HepG2 (cell line): ENCODE measurements at regions of chr1 and their contacts with region 1.

Region 1: DNA sequence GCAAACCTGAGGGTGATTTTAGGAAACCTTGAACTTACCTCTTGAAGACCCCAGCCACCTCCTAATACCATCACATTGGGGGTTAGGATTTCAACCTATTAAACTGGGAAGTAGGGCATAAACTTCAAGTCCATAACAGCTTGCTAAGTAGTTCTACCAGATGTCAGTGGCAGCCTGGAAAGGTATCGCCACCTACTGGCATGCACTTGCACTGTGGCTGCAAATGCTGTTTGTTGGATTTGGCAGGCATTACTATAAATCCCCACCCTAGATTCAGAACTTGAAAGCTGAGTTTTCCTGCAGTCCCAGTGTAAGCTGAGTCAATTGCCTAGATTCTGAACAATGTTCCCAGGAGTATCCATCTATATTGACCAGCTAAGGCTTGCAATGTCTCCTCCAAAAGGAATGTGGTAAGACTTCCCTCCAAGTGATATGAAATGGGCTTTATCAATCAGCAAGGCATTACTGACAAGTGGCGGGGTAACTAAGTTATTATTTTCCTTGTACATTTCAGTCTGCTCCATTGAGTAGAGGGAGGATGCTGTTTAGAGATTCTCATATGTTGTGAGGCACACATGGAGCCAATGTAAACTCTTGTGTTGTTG is 474.5 kb downstream of the PTPRC start:
- DNase-seq: peak; percentile 10
- ATAC-seq: peak; percentile 64
- H3K4me3 ChIP-seq: no peak overlapping the region
- H3K27ac ChIP-seq: no peak overlapping the region
- H3K4me1 ChIP-seq: no peaks in the 10 kb centered on the region
- H3K27me3 ChIP-seq: no peaks in the 10 kb centered on the region
- CTCF ChIP-seq: peak; percentile 56
- EP300 ChIP-seq: no peak
- POLR2A ChIP-seq: no peak
- RAD21 ChIP-seq: no peak

Region 2: GRCh38 chr1:198771563-198772153 is 341.7 kb before region 1 on chr1:
- CTCF ChIA-PET with region 1: no interaction called
- POLR2A ChIA-PET with region 1: no interaction called
- in situ Hi-C with region 1: loop called (anchors 25 kb)
- intact Hi-C with region 1: loop called (anchors 1 kb)
- DNase-seq: peak; percentile 7
- ATAC-seq: no peak
- H3K4me3 ChIP-seq: no peak overlapping the region
- H3K27ac ChIP-seq: no peak overlapping the region
- H3K4me1 ChIP-seq: no peaks in the 10 kb centered on the region
- H3K27me3 ChIP-seq: no peaks in the 10 kb centered on the region; a peak in 1 of 5 replicates
- CTCF ChIP-seq: no peak
- EP300 ChIP-seq: no peak
- POLR2A ChIP-seq: no peak
- RAD21 ChIP-seq: no peak

Region 3: GRCh38 chr1:199551967-199552565 is 438.7 kb after region 1 on chr1:
- CTCF ChIA-PET with region 1: no interaction called
- POLR2A ChIA-PET with region 1: no interaction called
- in situ Hi-C with region 1: no loop called
- intact Hi-C with region 1: loop called (anchors 10 kb)
- DNase-seq: peak; percentile 44
- ATAC-seq: no peak; the same call in 2 of the 3 replicates
- H3K4me3 ChIP-seq: no peak overlapping the region
- H3K27ac ChIP-seq: no peak overlapping the region
- H3K4me1 ChIP-seq: no peaks in the 10 kb centered on the region
- H3K27me3 ChIP-seq: no peaks in the 10 kb centered on the region
- CTCF ChIP-seq: peak; percentile 60
- EP300 ChIP-seq: no peak
- POLR2A ChIP-seq: no peak
- RAD21 ChIP-seq: no peak